ENCODE measurements at regions of chr14 and their contacts with region 1.

Region 1: DNA sequence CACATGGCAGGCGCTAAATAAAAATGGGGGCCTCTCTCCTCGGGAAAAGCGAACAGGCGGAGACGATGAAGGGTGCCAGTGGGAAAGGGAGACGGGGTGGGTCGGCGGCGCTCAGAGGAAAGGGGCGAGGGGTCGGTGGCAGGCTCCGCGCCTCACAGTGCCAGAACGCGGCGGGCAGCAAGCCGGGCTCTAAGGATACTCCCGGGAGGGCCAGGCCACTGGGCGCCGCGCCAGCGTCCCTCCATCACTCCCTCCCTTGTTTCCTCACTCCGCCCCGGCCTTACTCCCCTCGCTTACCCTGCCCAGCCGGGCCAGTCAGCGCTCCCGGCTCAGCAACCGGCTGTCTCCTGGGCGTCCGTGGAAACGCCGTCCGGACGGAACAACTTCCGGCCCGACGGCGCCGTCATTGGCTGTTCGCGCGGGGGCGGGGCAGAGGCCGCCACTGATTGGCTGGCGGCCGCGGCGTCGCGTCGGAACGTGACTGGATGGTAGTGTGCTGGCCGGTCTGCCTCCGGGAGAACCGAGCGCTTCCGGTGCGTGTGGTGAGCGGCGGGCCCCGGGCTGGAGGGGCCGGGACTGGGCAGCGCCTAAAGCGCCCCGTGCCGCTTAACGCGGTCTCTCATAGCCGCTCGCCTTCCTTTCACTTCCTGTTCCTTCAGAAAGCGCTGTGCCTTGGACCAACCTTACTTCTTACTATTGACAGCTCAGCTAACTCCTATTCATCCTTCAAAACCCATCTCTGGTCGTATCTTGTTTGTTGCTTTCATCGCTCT is 53.0 kb downstream of the SLC25A47 start:
- DNase-seq: peak; percentile 94 to 98 (median 97)
- H3K4me3 ChIP-seq: peak within 1 kb of the TSS in 3 of 4 donors; percentile 42 to 79 (median 71)
- H3K27ac ChIP-seq: peak within 1 kb of the TSS; percentile 69 to 98 (median 95)
- H3K4me1 ChIP-seq: peaks cover 7 to 26% of the 10 kb centered on the region in 2 donors
- H3K27me3 ChIP-seq: no peaks in the 10 kb centered on the region
- CTCF ChIP-seq: peak in 1 of 6 experiments; percentile 19
- POLR2A ChIP-seq: peak; percentile 18 to 80

Region 2: GRCh38 chr14:100203949-100204834 is 172.0 kb before region 1 on chr14:
- intact Hi-C with region 1: no loop called
- DNase-seq: peak; percentile 58 to 90 (median 88)
- H3K4me3 ChIP-seq: no peak overlapping the region
- H3K27ac ChIP-seq: peak overlapping the region; percentile 53 to 82 (median 67)
- H3K4me1 ChIP-seq: peaks cover 7 to 14% of the 10 kb centered on the region in 2 donors
- H3K27me3 ChIP-seq: no peaks in the 10 kb centered on the region
- CTCF ChIP-seq: no peak
- POLR2A ChIP-seq: peak; percentile 4 to 75

Region 3: DNA sequence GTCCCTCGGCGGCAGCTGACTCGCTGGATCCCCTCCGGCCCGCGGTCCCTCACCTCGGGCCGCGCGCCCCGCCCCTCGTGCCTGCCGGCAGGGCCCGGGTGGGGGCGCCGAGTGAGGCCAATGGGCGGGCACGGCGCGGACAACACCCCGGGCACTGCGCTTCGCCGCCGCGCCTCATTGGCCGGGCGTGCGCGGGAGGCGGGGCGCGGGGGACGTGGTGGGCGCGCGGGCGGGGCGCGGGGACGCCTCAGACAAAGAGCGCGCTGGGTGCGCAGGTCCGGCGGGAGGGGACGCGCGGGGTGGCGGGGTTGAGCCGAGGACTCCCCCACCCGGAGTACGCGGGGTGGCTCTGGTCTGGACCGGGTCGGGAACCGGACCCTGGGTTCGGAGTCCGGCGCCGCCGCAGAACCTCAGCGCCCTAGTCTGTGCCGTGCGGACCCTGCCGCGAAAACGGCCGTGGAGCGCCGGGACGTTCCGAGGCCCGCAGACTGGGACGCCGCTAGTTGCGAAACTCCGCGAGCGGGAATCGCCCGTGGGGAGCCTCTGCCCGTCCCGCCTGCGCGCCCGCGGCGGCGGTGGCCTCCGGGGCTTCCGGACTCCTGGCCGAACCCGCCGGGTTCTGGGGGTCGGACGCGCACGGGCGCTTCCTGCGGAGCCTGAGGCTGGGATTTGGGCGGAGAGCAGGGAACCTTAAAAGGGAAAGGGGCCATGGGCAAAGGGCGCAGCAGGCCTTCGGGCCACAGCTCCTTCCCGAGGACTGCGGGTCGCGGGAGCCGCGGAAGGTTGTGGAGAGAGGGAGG is 69.5 kb before region 1 on chr14 and contains the start of gene SLC25A29:
- intact Hi-C with region 1: loop called (anchors 5 to 10 kb)
- DNase-seq: peak; percentile 84 to 94 (median 89)
- H3K4me3 ChIP-seq: peak within 1 kb of the TSS; percentile 40 to 91 (median 82)
- H3K27ac ChIP-seq: peak within 1 kb of the TSS; percentile 65 to 92 (median 90)
- H3K4me1 ChIP-seq: peaks cover 26 to 37% of the 10 kb centered on the region in 2 donors
- H3K27me3 ChIP-seq: no peaks in the 10 kb centered on the region
- CTCF ChIP-seq: no peak
- POLR2A ChIP-seq: peak; percentile 47 to 92
- total RNA-seq, gene SLC25A29: 31.2 to 118 (median 86.4) TPM

Region 4: GRCh38 chr14:100540141-100540925 is 164.2 kb after region 1 on chr14:
- intact Hi-C with region 1: no loop called
- DNase-seq: no peak
- H3K4me3 ChIP-seq: no peak overlapping the region
- H3K27ac ChIP-seq: no peak overlapping the region
- H3K4me1 ChIP-seq: no peaks in the 10 kb centered on the region
- H3K27me3 ChIP-seq: no peaks in the 10 kb centered on the region
- CTCF ChIP-seq: peak in 2 of 6 experiments; percentile 10 to 33
- POLR2A ChIP-seq: no peak